ENCODE measurements at regions of chr17 and their contacts with region 1.

Region 1: DNA sequence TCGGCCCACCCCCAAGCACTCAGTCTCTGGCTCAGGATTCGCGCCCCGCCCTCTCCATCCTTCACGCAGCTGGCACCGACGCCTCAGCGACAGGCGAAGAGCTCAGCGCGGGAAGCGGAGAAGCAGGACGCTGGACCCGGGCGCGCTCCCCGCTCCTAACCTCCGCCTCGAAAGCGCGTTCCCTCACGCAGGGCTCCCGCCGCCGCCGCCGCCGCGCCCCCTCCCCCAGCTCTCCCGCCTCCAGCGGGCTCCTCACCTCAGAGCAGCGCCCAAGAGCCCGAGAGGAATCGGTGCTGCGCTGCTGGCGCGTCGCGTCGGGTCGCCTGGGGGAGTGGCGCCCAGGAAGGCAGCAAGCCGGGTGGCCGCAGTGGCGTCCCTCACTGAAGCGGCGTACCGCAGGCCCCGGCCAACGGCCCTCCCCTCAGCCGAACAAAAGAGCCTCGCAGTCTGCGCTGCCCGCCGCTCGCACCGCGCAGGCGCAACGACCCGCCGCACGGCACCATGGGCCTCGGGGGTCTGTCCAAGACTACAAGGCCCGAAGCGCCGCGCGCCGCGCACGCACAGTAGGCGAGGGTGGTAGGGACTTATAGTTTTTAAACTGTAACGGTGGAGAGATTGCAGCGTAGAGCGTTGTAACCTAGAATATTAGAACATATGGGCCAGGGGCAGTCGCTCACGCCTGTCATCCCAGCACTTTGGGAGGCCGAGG is at the start of gene CBX1:
- DNase-seq: peak; percentile 98
- H3K4me3 ChIP-seq: peak within 1 kb of the TSS; percentile 66 to 90
- H3K27ac ChIP-seq: peak within 1 kb of the TSS; percentile 81 to 91
- H3K4me1 ChIP-seq: peaks cover 3 to 6% of the 10 kb centered on the region in 2 experiments; a peak in 2 of 4 replicates
- H3K27me3 ChIP-seq: no peaks in the 10 kb centered on the region
- CTCF ChIP-seq: no peak; the same call in 1 of the 2 replicates
- EP300 ChIP-seq: no peak; a peak in 1 of 4 replicates
- RAD21 ChIP-seq: no peak
- polyA plus RNA-seq, gene CBX1: 102 and 112 TPM in 2 replicates

Region 2: GRCh38 chr17:48037036-48037837 is 63.9 kb before region 1 on chr17 and contains the start of gene COPZ2:
- CTCF ChIA-PET with region 1: interaction called, 10 read pairs
- POLR2A ChIA-PET with region 1: no interaction called
- DNase-seq: peak; percentile 85
- H3K4me3 ChIP-seq: peak within 1 kb of the TSS; percentile 53 to 63
- H3K27ac ChIP-seq: peak within 1 kb of the TSS in 1 of 2 experiments; percentile 1; a peak in 1 of 4 replicates
- H3K4me1 ChIP-seq: peaks cover 5 to 14% of the 10 kb centered on the region in 2 experiments; a peak in 2 of 4 replicates
- H3K27me3 ChIP-seq: no peaks in the 10 kb centered on the region
- CTCF ChIP-seq: peak; percentile 69
- EP300 ChIP-seq: no peak
- RAD21 ChIP-seq: peak; percentile 13; the same call in 1 of the 2 replicates
- polyA plus RNA-seq, gene COPZ2: 31.2 and 36.9 TPM in 2 replicates

Measured in SK-N-SH (cell line).